Activated B cell treated with CpG ODN at 0.5 μM for 24 hours (primary cell): ENCODE measurements at regions of chr19 and their contacts with region 1.

Region 1: DNA sequence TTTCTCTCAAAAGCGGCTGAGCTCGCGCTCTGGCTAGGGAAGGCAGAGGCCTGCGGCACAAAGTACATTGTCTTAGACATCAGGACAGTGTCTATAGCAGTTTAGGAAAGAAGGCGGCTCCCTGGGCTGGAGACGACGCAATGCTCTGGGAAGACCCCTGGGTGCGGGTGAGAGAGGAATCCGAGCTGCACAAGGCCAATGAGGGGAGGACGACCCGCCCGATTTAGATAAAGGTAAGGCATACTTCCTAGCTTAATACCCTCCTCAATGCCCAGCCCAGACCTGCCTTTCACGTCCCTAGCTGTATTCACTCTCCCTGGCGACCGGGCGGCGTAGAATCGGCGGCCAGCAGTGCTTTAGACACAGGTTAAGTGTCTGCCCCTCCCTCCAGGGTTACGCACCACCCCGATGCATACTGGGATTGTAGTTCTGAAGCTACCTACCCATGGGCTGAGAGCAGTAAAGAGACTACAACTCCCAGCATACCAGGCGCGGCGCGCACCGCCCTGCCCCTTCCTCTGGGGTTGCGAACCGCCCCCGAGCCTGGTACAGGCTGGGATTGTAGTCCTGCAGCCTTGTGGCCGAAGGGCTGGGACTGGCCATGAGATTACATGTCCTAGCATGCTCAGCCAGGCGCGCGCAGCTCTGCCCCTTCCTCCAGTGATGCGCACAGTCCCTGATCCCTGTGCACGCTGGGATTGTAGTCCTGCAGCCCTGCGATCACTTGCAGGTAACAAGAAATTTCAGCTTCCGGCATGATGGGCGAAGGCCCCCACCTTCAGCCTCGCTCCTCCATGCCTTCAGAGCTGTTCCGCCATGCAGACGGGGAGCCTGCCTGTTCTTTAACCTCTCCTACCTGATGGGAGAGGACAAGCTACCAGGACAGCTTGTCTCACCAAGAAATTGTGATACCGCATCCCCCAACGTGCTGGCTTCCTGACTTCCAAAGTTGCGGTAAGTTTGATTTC is 43.4 kb upstream of the ZNF14 start:
- DNase-seq: peak; percentile 84
- ATAC-seq: peak; percentile 99
- H3K4me3 Mint-ChIP-seq: peak overlapping the region; percentile 97
- H3K27ac Mint-ChIP-seq: peak overlapping the region; percentile 88
- H3K4me1 Mint-ChIP-seq: peaks cover 45% of the 10 kb centered on the region
- H3K27me3 Mint-ChIP-seq: no peaks in the 10 kb centered on the region
- CTCF ChIP-seq: no peak

Region 2: GRCh38 chr19:19531951-19532805 is 244.1 kb before region 1 on chr19:
- CTCF ChIA-PET with region 1: no interaction called
- POLR2A ChIA-PET with region 1: no interaction called
- intact Hi-C with region 1: loop called (anchors 2 kb)
- DNase-seq: peak; percentile 86
- ATAC-seq: peak; percentile 85
- H3K4me3 Mint-ChIP-seq: no peak overlapping the region
- H3K27ac Mint-ChIP-seq: no peak overlapping the region
- H3K4me1 Mint-ChIP-seq: peaks cover 13% of the 10 kb centered on the region
- H3K27me3 Mint-ChIP-seq: no peaks in the 10 kb centered on the region
- CTCF ChIP-seq: peak; percentile 54

Region 3: DNA sequence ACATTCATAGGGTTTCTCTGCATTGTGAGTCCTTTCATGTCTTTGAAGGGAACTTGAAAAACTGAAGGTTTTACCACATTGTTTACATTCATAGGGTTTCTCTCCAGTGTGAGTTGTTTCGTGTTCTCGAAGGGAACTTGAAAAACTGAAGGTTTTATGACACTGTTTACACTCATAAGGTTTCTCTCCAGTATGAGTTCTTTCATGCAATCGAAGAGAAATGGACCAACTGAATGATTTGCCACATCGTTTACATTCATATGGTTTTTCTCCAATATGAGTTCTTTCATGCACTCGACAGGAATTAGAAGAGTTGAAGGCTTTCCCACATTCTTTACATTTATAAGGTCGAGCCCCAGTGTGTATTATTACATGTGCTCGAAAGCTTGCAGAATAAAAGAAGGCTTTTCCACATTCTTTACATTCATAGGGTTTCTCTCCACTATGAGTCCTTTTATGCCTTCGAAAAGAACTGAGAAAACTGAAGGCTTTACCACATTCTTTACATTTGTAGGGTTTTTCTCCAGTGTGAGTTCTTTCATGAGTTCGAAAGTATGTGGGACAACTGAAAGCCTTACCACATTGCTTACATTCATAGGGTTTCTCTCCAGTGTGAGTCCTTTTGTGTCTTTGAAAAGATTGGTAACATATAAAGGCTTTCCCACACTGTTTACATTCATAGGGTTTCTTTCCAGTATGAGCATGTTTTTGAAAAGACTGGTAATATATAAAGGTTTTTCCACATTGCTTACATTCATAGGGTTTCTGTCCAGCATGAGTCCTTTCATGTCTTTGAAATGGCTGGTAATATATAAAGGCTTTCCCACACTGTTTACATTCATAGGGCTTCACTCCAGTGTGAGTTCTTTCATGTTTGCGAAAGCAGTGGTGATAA is 64.1 kb before region 1 on chr19:
- CTCF ChIA-PET with region 1: no interaction called
- POLR2A ChIA-PET with region 1: no interaction called
- intact Hi-C with region 1: no loop called
- DNase-seq: no peak
- ATAC-seq: no peak
- H3K4me3 Mint-ChIP-seq: no peak overlapping the region
- H3K27ac Mint-ChIP-seq: no peak overlapping the region
- H3K4me1 Mint-ChIP-seq: no peaks in the 10 kb centered on the region
- H3K27me3 Mint-ChIP-seq: no peaks in the 10 kb centered on the region
- CTCF ChIP-seq: no peak

Region 4: GRCh38 chr19:19732579-19733501 is 43.5 kb before region 1 on chr19 and contains the start of gene ZNF14:
- CTCF ChIA-PET with region 1: no interaction called
- POLR2A ChIA-PET with region 1: interaction called, 18 read pairs
- intact Hi-C with region 1: loop called (anchors 1 kb)
- DNase-seq: peak; percentile 79
- ATAC-seq: peak; percentile 99
- H3K4me3 Mint-ChIP-seq: peak within 1 kb of the TSS; percentile 99
- H3K27ac Mint-ChIP-seq: peak within 1 kb of the TSS; percentile 96
- H3K4me1 Mint-ChIP-seq: peaks cover 28% of the 10 kb centered on the region
- H3K27me3 Mint-ChIP-seq: no peaks in the 10 kb centered on the region
- CTCF ChIP-seq: no peak
- total RNA-seq, gene ZNF14: 11.8 and 13.4 TPM in 2 replicates

Region 5: GRCh38 chr19:19835560-19836038 is 59.3 kb after region 1 on chr19:
- CTCF ChIA-PET with region 1: no interaction called
- POLR2A ChIA-PET with region 1: no interaction called
- intact Hi-C with region 1: no loop called
- DNase-seq: no peak
- ATAC-seq: no peak
- H3K4me3 Mint-ChIP-seq: no peak overlapping the region
- H3K27ac Mint-ChIP-seq: no peak overlapping the region
- H3K4me1 Mint-ChIP-seq: no peaks in the 10 kb centered on the region
- H3K27me3 Mint-ChIP-seq: no peaks in the 10 kb centered on the region
- CTCF ChIP-seq: no peak

Region 6: GRCh38 chr19:19860756-19861390 is 84.5 kb after region 1 on chr19:
- CTCF ChIA-PET with region 1: interaction called, 3 read pairs
- POLR2A ChIA-PET with region 1: interaction called, 19 read pairs
- intact Hi-C with region 1: loop called (anchors 1 kb)
- DNase-seq: peak; percentile 30
- ATAC-seq: peak; percentile 58
- H3K4me3 Mint-ChIP-seq: peak overlapping the region; percentile 90
- H3K27ac Mint-ChIP-seq: peak overlapping the region; percentile 81
- H3K4me1 Mint-ChIP-seq: peaks cover 31% of the 10 kb centered on the region
- H3K27me3 Mint-ChIP-seq: no peaks in the 10 kb centered on the region
- CTCF ChIP-seq: no peak

Region 7: GRCh38 chr19:19900729-19901444 is 124.6 kb after region 1 on chr19 and contains the start of gene ZNF93:
- CTCF ChIA-PET with region 1: no interaction called
- POLR2A ChIA-PET with region 1: interaction called, 29 read pairs
- intact Hi-C with region 1: loop called (anchors 1 kb)
- DNase-seq: peak; percentile 74
- ATAC-seq: peak; percentile 97
- H3K4me3 Mint-ChIP-seq: peak within 1 kb of the TSS; percentile 98
- H3K27ac Mint-ChIP-seq: peak within 1 kb of the TSS; percentile 91
- H3K4me1 Mint-ChIP-seq: peaks cover 34% of the 10 kb centered on the region
- H3K27me3 Mint-ChIP-seq: no peaks in the 10 kb centered on the region
- CTCF ChIP-seq: no peak
- total RNA-seq, gene ZNF93: 13.5 and 14.9 TPM in 2 replicates

Region 8: DNA sequence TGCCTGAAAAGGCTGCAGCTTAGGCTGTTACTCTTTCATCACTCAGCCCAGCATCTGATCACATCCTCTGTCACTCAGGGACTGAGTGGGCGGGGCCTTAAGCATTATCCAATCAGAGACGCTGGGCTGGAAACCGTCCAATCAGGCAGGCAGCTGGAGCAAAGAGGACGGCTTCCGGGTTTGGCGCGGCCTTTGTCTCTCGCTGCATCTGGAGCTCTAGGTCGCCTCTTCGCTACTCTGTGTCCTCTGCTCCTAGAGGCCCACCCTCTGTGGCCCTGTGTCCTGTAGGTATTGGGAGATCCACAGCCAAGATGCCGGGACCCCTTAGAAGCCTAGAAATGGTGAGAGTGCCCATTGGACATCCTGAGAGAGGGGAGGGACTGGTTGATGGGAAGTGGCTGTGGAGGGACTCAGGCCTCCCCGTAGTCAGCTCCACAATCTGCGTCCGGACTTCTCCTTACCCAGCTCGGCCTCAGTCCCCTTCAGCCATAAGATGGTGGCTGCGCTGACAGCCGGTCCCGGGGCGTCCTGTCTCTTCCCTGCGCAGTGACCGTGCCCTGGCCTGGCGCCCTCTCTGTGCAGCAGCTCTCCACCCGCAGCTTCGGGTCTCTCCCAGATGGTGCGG is 390.8 kb after region 1 on chr19 and contains the start of gene ZNF486:
- CTCF ChIA-PET with region 1: no interaction called
- POLR2A ChIA-PET with region 1: no interaction called
- intact Hi-C with region 1: loop called (anchors 2 kb)
- DNase-seq: peak; percentile 80
- ATAC-seq: peak; percentile 96
- H3K4me3 Mint-ChIP-seq: peak within 1 kb of the TSS; percentile 99
- H3K27ac Mint-ChIP-seq: peak within 1 kb of the TSS; percentile 97
- H3K4me1 Mint-ChIP-seq: peaks cover 59% of the 10 kb centered on the region
- H3K27me3 Mint-ChIP-seq: no peaks in the 10 kb centered on the region
- CTCF ChIP-seq: no peak
- total RNA-seq, gene ZNF486: 13.5 and 16.2 TPM in 2 replicates